ENCODE measurements at regions of chr9 and their contacts with region 1.

Region 1: GRCh38 chr9:3777137-3777536 is 251.3 kb upstream of the RFX3 start:
- DNase-seq: no peak
- ATAC-seq: no peak
- H3K4me3 ChIP-seq: no peak overlapping the region
- H3K27ac ChIP-seq: no peak overlapping the region
- H3K4me1 ChIP-seq: no peaks in the 10 kb centered on the region
- H3K27me3 ChIP-seq: peaks cover 5% of the 10 kb centered on the region
- CTCF ChIP-seq: no peak
- POLR2A ChIP-seq: no peak
- RAD21 ChIP-seq: no peak

Region 2: DNA sequence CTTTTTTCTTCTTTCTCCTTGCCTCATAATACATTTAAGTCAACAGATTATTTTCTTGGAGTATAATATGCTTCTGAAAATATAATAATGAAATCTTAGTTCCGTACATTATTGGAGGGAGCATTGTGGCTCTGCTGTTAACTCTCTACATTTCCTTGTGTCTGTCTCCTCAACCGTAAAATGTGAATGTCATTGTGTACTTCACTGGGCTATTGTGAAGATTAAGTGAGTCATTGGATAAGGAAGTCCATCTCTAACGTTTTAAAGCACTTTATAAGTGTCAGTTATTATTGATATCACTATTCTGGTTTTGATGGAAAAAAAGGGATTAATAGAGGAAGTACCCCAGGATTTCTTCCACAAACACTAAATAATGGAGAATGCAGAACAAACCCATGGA is 53.2 kb after region 1 on chr9:
- CTCF ChIA-PET with region 1: no interaction called
- POLR2A ChIA-PET with region 1: no interaction called
- dilution Hi-C with region 1: no loop called
- in situ Hi-C with region 1: no loop called
- intact Hi-C with region 1: loop called (anchors 10 kb)
- DNase-seq: no peak
- ATAC-seq: no peak
- H3K4me3 ChIP-seq: no peak overlapping the region
- H3K27ac ChIP-seq: no peak overlapping the region
- H3K4me1 ChIP-seq: peaks cover 5% of the 10 kb centered on the region
- H3K27me3 ChIP-seq: no peaks in the 10 kb centered on the region
- CTCF ChIP-seq: no peak
- POLR2A ChIP-seq: no peak
- RAD21 ChIP-seq: no peak

Measured in IMR-90 (cell line).